CD4-positive, alpha-beta memory T cell (primary cell): ENCODE measurements at regions of chr17 and their contacts with region 1.

Region 1: GRCh38 chr17:4980644-4981216 is 6.7 kb downstream of the CAMTA2 start:
- DNase-seq: peak; percentile 62 to 73 (median 67)
- H3K4me3 ChIP-seq: no peak overlapping the region
- H3K4me3 Mint-ChIP-seq: peak overlapping the region in 5 of 8 donors; percentile 8 to 65 (median 22)
- H3K27ac ChIP-seq: no peak overlapping the region
- H3K27ac Mint-ChIP-seq: peak overlapping the region; percentile 34 to 94 (median 80)
- H3K4me1 ChIP-seq: peaks cover 15% of the 10 kb centered on the region
- H3K4me1 Mint-ChIP-seq: peaks cover 17 to 36% (median 22%) of the 10 kb centered on the region in 4 donors
- H3K27me3 ChIP-seq: no peaks in the 10 kb centered on the region
- H3K27me3 Mint-ChIP-seq: no peaks in the 10 kb centered on the region

Region 2: DNA sequence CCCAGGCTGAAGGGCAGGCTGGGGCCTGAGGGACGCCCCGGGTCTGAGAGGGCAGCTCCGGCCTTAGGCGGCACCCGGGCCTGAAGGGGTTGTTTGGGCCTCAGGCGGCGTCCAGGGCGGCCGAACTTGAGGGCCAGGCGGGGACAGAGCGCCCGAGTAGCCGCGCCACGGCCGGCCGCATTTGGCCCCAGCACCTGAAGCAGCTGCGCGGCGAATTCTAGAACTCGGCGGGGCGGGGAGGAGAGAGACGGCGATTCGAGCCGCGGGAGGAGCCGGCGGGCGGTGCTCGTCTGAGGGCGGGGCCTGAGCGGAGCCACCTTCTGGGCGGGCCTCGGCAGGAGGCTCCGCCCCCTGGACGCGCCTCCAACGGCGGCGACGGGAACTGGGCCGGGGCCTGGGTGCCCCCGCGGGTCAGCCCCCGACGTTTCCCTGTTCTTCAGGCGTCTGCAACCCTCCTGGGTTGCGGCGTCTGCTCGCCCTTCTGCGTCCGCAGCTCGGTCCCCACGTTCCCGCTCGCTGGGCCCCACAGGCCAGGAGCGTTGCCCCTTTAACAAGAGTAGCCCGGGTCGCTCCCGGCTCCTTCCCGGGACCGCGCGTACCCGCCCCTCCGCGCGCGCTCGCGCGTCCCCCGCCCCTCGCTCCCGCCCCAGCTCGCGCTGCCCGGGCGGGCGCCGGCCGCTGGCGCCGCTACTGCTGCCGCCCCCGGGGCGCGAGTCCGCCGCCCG is 16.7 kb after region 1 on chr17 and contains the starts of genes INCA1 and KIF1C:
- CTCF ChIA-PET with region 1: interaction called, 4 read pairs
- POLR2A ChIA-PET with region 1: interaction called, 12 read pairs
- intact Hi-C with region 1: no loop called
- DNase-seq: peak; percentile 88 to 94 (median 92)
- H3K4me3 ChIP-seq: peak within 1 kb of the TSS; percentile 36 to 72
- H3K4me3 Mint-ChIP-seq: peak within 1 kb of the TSS; percentile 78 to 91 (median 84)
- H3K27ac ChIP-seq: peak within 1 kb of the TSS; percentile 79
- H3K27ac Mint-ChIP-seq: peak within 1 kb of the TSS; percentile 75 to 94 (median 87)
- H3K4me1 ChIP-seq: peaks cover 22% of the 10 kb centered on the region
- H3K4me1 Mint-ChIP-seq: peaks cover 10 to 42% (median 24%) of the 10 kb centered on the region in 4 donors
- H3K27me3 ChIP-seq: no peaks in the 10 kb centered on the region
- H3K27me3 Mint-ChIP-seq: no peaks in the 10 kb centered on the region
- total RNA-seq, gene INCA1: 0.36 to 0.67 TPM
- total RNA-seq, gene KIF1C: 29.8 to 36.9 TPM

Region 3: GRCh38 chr17:5031365-5032082 is 50.8 kb after region 1 on chr17:
- CTCF ChIA-PET with region 1: interaction called, 13 read pairs
- POLR2A ChIA-PET with region 1: no interaction called
- intact Hi-C with region 1: no loop called
- DNase-seq: peak; percentile 77 to 83 (median 81)
- H3K4me3 ChIP-seq: peak overlapping the region in 1 of 2 donors; percentile 23
- H3K4me3 Mint-ChIP-seq: peak overlapping the region; percentile 79 to 89 (median 87)
- H3K27ac ChIP-seq: peak overlapping the region; percentile 67
- H3K27ac Mint-ChIP-seq: peak overlapping the region; percentile 90 to 94 (median 93)
- H3K4me1 ChIP-seq: peaks cover 25% of the 10 kb centered on the region
- H3K4me1 Mint-ChIP-seq: peaks cover 11 to 38% (median 17%) of the 10 kb centered on the region in 4 donors
- H3K27me3 ChIP-seq: no peaks in the 10 kb centered on the region
- H3K27me3 Mint-ChIP-seq: no peaks in the 10 kb centered on the region

Region 4: DNA sequence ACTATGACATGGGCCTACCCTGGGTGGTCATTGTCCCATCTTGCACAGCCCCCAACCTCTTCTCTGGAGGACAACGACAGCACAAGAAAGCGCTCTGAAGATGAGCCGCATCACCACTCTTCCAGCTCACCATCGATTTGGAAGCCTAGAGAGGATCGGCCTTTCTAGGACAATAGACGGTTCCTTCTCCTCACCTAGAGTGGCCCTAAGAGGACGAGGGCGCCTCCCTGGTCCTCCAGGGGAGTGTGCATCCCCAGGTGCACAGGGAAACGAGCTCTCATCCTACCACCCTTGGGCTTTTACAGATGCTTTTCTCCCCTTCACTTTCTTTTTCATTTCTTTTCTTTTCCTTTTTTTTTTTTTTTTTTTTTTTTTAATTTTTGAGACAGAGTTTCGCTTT is 74.8 kb after region 1 on chr17:
- CTCF ChIA-PET with region 1: interaction called, 72 read pairs
- POLR2A ChIA-PET with region 1: interaction called, 3 read pairs
- intact Hi-C with region 1: no loop called
- DNase-seq: no peak
- H3K4me3 ChIP-seq: no peak overlapping the region
- H3K4me3 Mint-ChIP-seq: no peak overlapping the region
- H3K27ac ChIP-seq: no peak overlapping the region
- H3K27ac Mint-ChIP-seq: peak overlapping the region in 2 of 7 donors; percentile 22 to 35
- H3K4me1 ChIP-seq: peaks cover 2% of the 10 kb centered on the region
- H3K4me1 Mint-ChIP-seq: peaks cover under 1 to 3% (median 1%) of the 10 kb centered on the region in 4 donors
- H3K27me3 ChIP-seq: no peaks in the 10 kb centered on the region
- H3K27me3 Mint-ChIP-seq: peaks cover 0 to 1% of the 10 kb centered on the region in 2 donors

Region 5: DNA sequence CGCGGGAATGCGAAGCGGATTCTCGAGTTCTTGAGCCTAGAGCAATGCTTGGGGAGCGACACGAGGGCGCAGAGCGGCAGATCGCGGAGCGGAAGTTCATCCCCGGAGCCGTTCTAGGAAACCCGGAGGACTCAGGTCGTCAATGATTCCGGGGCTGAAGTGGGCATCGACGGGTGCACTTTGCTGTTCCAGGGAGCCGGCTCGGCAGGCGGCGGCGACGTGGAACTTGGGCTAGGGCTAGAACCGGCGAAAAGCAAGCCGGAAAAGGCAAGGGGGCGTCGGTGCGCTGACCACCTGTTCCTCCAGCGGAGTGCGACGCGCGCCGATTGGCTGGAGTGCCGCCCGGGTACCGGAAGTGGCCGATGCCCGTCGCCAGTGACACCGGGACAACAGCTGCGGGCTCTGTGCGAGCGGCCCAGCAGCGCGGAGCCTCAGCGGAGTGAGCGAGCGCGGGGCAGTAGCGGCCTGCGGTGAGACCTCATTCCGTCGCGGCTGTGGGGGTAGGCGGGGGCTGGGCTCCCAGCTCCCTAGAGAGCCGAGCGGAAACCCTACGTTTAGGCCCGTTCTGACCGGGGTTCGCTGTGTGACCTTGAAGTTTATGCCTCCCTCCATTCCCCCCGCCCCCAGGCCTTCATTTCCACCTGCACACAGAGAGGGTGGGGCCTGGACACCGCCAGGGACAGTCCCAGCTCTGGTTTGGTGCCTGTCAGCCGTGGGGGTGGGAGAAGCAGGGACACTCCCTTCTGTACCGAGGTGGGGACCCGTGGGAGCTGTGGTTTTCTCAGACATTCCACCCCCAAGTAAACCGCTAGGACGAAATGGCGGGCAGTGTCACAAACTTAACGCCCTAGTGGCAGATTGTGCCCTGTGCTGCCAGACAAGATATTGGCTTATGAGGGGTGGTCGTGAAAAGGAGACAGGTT is 97.6 kb after region 1 on chr17 and contains the start of gene ZFP3:
- CTCF ChIA-PET with region 1: no interaction called
- POLR2A ChIA-PET with region 1: no interaction called
- intact Hi-C with region 1: no loop called
- DNase-seq: peak; percentile 65 to 84 (median 72)
- H3K4me3 ChIP-seq: peak within 1 kb of the TSS; percentile 76 to 87
- H3K4me3 Mint-ChIP-seq: peak within 1 kb of the TSS; percentile 89 to 98 (median 94)
- H3K27ac ChIP-seq: peak within 1 kb of the TSS; percentile 64
- H3K27ac Mint-ChIP-seq: peak within 1 kb of the TSS; percentile 30 to 98 (median 93)
- H3K4me1 ChIP-seq: peaks cover 16% of the 10 kb centered on the region
- H3K4me1 Mint-ChIP-seq: peaks cover 19 to 34% (median 30%) of the 10 kb centered on the region in 4 donors
- H3K27me3 ChIP-seq: no peaks in the 10 kb centered on the region
- H3K27me3 Mint-ChIP-seq: no peaks in the 10 kb centered on the region
- total RNA-seq, gene ZFP3: 12.0 to 13.0 TPM